ENCODE measurements at regions of chr9 and their contacts with region 1.

Region 1: GRCh38 chr9:113578882-113579282 is 115.4 kb downstream of the RGS3 start:
- DNase-seq: peak; percentile 71 to 92 (median 79)
- H3K4me3 ChIP-seq: peak overlapping the region; percentile 48
- H3K4me3 Mint-ChIP-seq: peak overlapping the region; percentile 72 to 87 (median 82)
- H3K27ac ChIP-seq: peak overlapping the region; percentile 41
- H3K27ac Mint-ChIP-seq: peak overlapping the region; percentile 91 to 97 (median 95)
- H3K4me1 ChIP-seq: peaks cover 65% of the 10 kb centered on the region
- H3K4me1 Mint-ChIP-seq: peaks cover 84 to 94% (median 90%) of the 10 kb centered on the region in 3 donors
- H3K27me3 ChIP-seq: no peaks in the 10 kb centered on the region
- H3K27me3 Mint-ChIP-seq: no peaks in the 10 kb centered on the region

Region 2: GRCh38 chr9:113275157-113276131 is 303.4 kb before region 1 on chr9 and contains the starts of genes CDC26 and PRPF4:
- CTCF ChIA-PET with region 1: interaction called, 11 read pairs
- POLR2A ChIA-PET with region 1: no interaction called
- DNase-seq: peak; percentile 93 to 97 (median 93)
- H3K4me3 ChIP-seq: peak within 1 kb of the TSS; percentile 92
- H3K4me3 Mint-ChIP-seq: no peak within 1 kb of the TSS
- H3K27ac ChIP-seq: peak within 1 kb of the TSS; percentile 95
- H3K27ac Mint-ChIP-seq: no peak within 1 kb of the TSS
- H3K4me1 ChIP-seq: peaks cover 23% of the 10 kb centered on the region
- H3K4me1 Mint-ChIP-seq: peaks cover 27 to 40% (median 37%) of the 10 kb centered on the region in 3 donors
- H3K27me3 ChIP-seq: no peaks in the 10 kb centered on the region
- H3K27me3 Mint-ChIP-seq: no peaks in the 10 kb centered on the region
- total RNA-seq, gene CDC26: 51.1 to 56.5 TPM
- total RNA-seq, gene PRPF4: 69.5 to 71.4 TPM

Region 3: GRCh38 chr9:113410207-113410864 is 168.5 kb before region 1 on chr9 and contains the starts of genes C9orf43 and POLE3:
- CTCF ChIA-PET with region 1: interaction called, 15 read pairs
- POLR2A ChIA-PET with region 1: interaction called, 7 read pairs
- DNase-seq: peak; percentile 90 to 95 (median 94)
- H3K4me3 ChIP-seq: peak within 1 kb of the TSS; percentile 82
- H3K4me3 Mint-ChIP-seq: peak within 1 kb of the TSS; percentile 90 to 99 (median 97)
- H3K27ac ChIP-seq: peak within 1 kb of the TSS; percentile 91
- H3K27ac Mint-ChIP-seq: peak within 1 kb of the TSS; percentile 92 to 100 (median 98)
- H3K4me1 ChIP-seq: peaks cover 20% of the 10 kb centered on the region
- H3K4me1 Mint-ChIP-seq: peaks cover 28 to 41% (median 34%) of the 10 kb centered on the region in 3 donors
- H3K27me3 ChIP-seq: no peaks in the 10 kb centered on the region
- H3K27me3 Mint-ChIP-seq: peaks cover 0 to 3% of the 10 kb centered on the region in 2 donors
- total RNA-seq, gene C9orf43: 0.84 to 0.90 TPM
- total RNA-seq, gene POLE3: 88.2 to 88.5 TPM

Region 4: DNA sequence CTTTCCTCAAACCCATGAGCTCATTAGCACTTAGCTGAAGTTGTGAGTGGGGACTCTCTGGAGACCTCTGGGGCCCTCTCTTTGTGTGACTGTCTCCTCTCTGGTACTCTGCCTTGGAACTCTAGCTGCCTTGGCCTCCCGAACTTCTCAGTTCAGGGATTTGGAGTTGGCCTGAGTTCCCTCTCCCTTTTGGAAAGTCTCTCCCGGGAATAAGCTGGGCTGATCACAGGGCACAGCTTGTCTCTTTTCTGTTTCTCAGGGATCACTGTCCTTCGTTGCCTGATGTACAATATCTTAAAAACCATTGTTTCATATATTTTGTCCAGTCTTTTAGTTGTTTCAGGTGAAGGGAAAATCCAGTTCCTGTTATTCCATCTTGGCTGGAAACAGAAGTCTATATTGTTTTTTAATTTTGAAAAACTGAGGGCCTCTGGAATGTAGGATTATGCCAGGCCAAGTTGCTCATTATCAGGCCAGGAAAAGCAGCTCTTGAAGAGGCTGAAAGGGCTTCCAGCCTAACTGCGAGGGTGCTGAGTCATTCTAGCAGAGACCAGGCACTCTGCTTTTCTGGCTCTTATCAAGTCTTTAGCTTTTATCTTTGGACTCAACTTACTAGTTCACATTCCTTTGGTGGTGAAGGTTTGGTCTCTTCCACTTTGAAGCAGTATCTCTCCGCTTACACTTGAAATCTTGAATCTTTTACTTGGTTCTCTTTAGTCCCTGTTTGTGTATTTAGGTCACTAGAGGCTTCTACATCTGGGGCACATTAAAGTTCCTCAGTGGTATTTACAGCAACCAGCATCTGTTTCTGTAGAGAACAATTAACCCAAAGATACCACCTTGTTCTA is 123.7 kb before region 1 on chr9:
- CTCF ChIA-PET with region 1: interaction called, 50 read pairs
- POLR2A ChIA-PET with region 1: interaction called, 3 read pairs
- DNase-seq: no peak
- H3K4me3 ChIP-seq: no peak overlapping the region
- H3K4me3 Mint-ChIP-seq: no peak overlapping the region
- H3K27ac ChIP-seq: no peak overlapping the region
- H3K27ac Mint-ChIP-seq: peak overlapping the region in 4 of 8 donors; percentile 35 to 96 (median 56)
- H3K4me1 ChIP-seq: no peaks in the 10 kb centered on the region
- H3K4me1 Mint-ChIP-seq: peaks cover 1 to 8% (median 8%) of the 10 kb centered on the region in 3 donors
- H3K27me3 ChIP-seq: no peaks in the 10 kb centered on the region
- H3K27me3 Mint-ChIP-seq: peaks cover 0 to 1% of the 10 kb centered on the region in 2 donors

Region 5: GRCh38 chr9:113523421-113524236 is 55.3 kb before region 1 on chr9:
- CTCF ChIA-PET with region 1: interaction called, 30 read pairs
- POLR2A ChIA-PET with region 1: interaction called, 27 read pairs
- DNase-seq: peak; percentile 54 to 75 (median 57)
- H3K4me3 ChIP-seq: peak overlapping the region; percentile 33
- H3K4me3 Mint-ChIP-seq: peak overlapping the region; percentile 72 to 91 (median 82)
- H3K27ac ChIP-seq: no peak overlapping the region
- H3K27ac Mint-ChIP-seq: peak overlapping the region; percentile 84 to 97 (median 91)
- H3K4me1 ChIP-seq: peaks cover 79% of the 10 kb centered on the region
- H3K4me1 Mint-ChIP-seq: peaks cover 91 to 100% (median 97%) of the 10 kb centered on the region in 3 donors
- H3K27me3 ChIP-seq: no peaks in the 10 kb centered on the region
- H3K27me3 Mint-ChIP-seq: no peaks in the 10 kb centered on the region

Region 6: GRCh38 chr9:113591001-113591898 is 12.4 kb after region 1 on chr9:
- CTCF ChIA-PET with region 1: interaction called, 11 read pairs
- POLR2A ChIA-PET with region 1: no interaction called
- DNase-seq: peak in 4 of 5 donors; percentile 17 to 49 (median 30)
- H3K4me3 ChIP-seq: no peak overlapping the region
- H3K4me3 Mint-ChIP-seq: no peak overlapping the region
- H3K27ac ChIP-seq: no peak overlapping the region
- H3K27ac Mint-ChIP-seq: peak overlapping the region in 5 of 8 donors; percentile 47 to 74 (median 66)
- H3K4me1 ChIP-seq: peaks cover 4% of the 10 kb centered on the region
- H3K4me1 Mint-ChIP-seq: peaks cover 20 to 35% (median 29%) of the 10 kb centered on the region in 3 donors
- H3K27me3 ChIP-seq: no peaks in the 10 kb centered on the region
- H3K27me3 Mint-ChIP-seq: no peaks in the 10 kb centered on the region

Region 7: GRCh38 chr9:114027159-114027895 is 448.4 kb after region 1 on chr9:
- CTCF ChIA-PET with region 1: no interaction called
- POLR2A ChIA-PET with region 1: no interaction called
- DNase-seq: no peak
- H3K4me3 ChIP-seq: no peak overlapping the region
- H3K4me3 Mint-ChIP-seq: no peak overlapping the region
- H3K27ac ChIP-seq: no peak overlapping the region
- H3K27ac Mint-ChIP-seq: no peak overlapping the region
- H3K4me1 ChIP-seq: no peaks in the 10 kb centered on the region
- H3K4me1 Mint-ChIP-seq: no peaks in the 10 kb centered on the region
- H3K27me3 ChIP-seq: no peaks in the 10 kb centered on the region
- H3K27me3 Mint-ChIP-seq: peaks cover 3 to 4% of the 10 kb centered on the region in 2 donors